ENCODE measurements at regions of chr5 and their contacts with region 1.

Region 1: DNA sequence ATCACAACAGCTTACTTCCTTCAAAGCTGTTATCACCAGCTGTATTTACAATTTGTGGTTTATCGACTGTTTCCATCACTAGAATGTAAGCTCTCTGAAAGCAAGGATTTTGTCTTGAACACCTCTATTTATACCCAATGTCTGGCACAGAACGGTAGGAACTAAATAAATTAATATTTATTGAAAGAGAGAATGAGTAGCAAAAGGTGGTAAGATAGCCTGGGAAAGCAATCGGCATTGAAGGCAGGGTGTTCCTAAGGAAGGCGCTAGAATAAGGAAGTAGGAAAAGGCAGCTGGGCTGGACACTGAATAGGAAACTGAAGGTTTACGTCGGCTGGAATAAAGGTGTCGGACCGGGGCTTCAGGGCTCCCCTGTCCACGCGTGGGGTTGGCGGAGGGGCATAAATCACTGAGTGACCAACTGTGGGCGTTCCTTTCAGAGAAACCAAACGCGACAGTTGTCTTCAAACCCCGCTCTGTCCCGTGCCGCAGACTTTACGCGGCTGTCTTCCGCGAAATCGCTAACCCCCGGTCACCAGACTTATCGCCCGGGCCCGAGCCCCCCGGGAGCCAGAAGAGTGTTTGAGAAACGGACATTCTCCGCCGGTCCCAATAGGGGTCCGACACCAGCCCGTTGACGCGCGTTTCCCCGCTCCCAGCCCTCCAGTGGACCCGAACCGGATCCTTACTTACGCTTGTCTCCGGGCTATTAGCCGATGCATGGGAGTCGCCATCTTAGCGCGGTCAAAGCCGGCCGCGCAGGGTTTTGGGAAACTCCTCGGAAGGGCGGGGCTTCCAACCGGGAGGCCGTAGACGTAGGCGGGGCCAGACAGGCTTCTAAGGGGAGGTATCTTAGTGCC is at the start of gene ZCCHC10:
- DNase-seq: peak; percentile 95
- H3K4me3 Mint-ChIP-seq: peak within 1 kb of the TSS; percentile 88
- H3K27ac Mint-ChIP-seq: peak within 1 kb of the TSS; percentile 94
- H3K4me1 Mint-ChIP-seq: peaks cover 19% of the 10 kb centered on the region
- H3K27me3 Mint-ChIP-seq: no peaks in the 10 kb centered on the region
- CTCF ChIP-seq: no peak
- total RNA-seq, gene ZCCHC10: 35.0 and 37.7 TPM in 2 replicates

Region 2: DNA sequence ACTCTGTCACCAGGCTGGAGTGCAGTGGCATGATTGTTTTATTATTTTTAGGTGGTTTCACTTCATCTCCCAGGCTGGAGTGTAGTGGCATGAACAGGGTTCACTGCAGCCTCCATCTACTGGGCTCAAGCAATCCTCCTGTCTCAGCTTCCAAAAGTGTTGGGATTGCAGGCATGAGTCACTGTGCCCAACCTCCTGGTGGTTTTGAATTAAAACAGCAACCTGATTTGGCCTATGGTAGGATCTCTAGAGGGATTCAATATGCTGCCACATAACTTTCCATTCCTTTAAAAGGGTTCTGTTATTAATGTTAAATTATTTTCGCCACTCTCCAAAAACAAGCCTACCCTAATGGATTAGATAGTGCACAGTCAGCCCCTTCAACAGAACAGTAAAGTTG is 15.9 kb after region 1 on chr5:
- CTCF ChIA-PET with region 1: interaction called, 5 read pairs
- POLR2A ChIA-PET with region 1: interaction called, 25 read pairs
- intact Hi-C with region 1: no loop called
- DNase-seq: peak; percentile 81
- H3K4me3 Mint-ChIP-seq: no peak overlapping the region
- H3K27ac Mint-ChIP-seq: peak overlapping the region; percentile 10
- H3K4me1 Mint-ChIP-seq: peaks cover 36% of the 10 kb centered on the region
- H3K27me3 Mint-ChIP-seq: no peaks in the 10 kb centered on the region
- CTCF ChIP-seq: peak; percentile 34

Measured in MCF 10A (cell line).